PC-3 (cell line): ENCODE measurements at regions of chr14 and their contacts with region 1.

Region 1: DNA sequence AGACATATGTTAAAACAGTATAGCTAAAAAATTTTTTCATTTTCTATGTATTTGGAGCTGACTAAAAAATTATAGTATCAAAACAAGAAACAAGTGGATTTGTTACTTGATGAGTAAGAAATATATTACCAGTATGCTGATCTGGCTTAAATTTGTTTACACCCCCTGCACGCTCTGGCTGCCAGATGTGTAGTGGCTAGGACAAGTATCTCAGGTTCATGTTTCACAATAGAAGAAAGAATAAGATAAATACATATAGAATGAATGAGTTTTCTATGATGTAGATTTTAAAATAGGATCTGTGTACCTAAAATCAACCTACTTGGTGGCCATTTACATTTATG is 13.1 kb downstream of the NAA30 start:
- DNase-seq: no peak
- ATAC-seq: no peak
- H3K4me3 ChIP-seq: no peak overlapping the region
- H3K27ac ChIP-seq: no peak overlapping the region
- H3K4me1 ChIP-seq: no peaks in the 10 kb centered on the region
- H3K27me3 ChIP-seq: no peaks in the 10 kb centered on the region
- CTCF ChIP-seq: no peak

Region 2: GRCh38 chr14:57420033-57420432 is 16.5 kb after region 1 on chr14:
- CTCF ChIA-PET with region 1: no interaction called
- POLR2A ChIA-PET with region 1: no interaction called
- intact Hi-C with region 1: loop called (anchors 2 kb)
- DNase-seq: no peak
- ATAC-seq: no peak
- H3K4me3 ChIP-seq: no peak overlapping the region
- H3K27ac ChIP-seq: no peak overlapping the region
- H3K4me1 ChIP-seq: peaks cover 6% of the 10 kb centered on the region; the same call in 1 of the 2 replicates
- H3K27me3 ChIP-seq: no peaks in the 10 kb centered on the region
- CTCF ChIP-seq: no peak

Region 3: DNA sequence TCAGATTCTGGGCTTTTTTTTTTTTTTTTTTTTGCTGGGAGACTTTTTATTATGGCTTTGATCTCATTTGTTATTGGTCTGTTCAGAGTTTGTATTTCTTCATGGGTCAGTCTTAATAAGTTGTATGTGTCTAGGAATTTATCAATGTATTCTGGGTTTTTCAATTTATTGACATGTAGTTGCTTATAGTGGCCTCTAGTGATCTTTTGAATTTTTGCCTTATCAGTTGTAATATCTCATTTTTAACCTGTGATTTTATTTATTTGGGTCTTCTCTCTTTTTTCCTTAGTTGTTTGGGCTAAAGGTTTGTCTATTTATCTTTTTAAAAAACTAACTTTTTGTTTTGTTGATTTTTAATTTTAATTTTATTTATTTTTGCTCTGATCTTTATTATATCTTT is 32.4 kb after region 1 on chr14:
- CTCF ChIA-PET with region 1: no interaction called
- POLR2A ChIA-PET with region 1: no interaction called
- intact Hi-C with region 1: no loop called
- DNase-seq: no peak
- ATAC-seq: no peak
- H3K4me3 ChIP-seq: no peak overlapping the region
- H3K27ac ChIP-seq: no peak overlapping the region
- H3K4me1 ChIP-seq: no peaks in the 10 kb centered on the region
- H3K27me3 ChIP-seq: peaks cover 24% of the 10 kb centered on the region
- CTCF ChIP-seq: peak; percentile 53

Region 4: GRCh38 chr14:58969951-58970751 is 1566.7 kb after region 1 on chr14:
- CTCF ChIA-PET with region 1: no interaction called
- POLR2A ChIA-PET with region 1: no interaction called
- intact Hi-C with region 1: no loop called
- DNase-seq: no peak
- ATAC-seq: no peak
- H3K4me3 ChIP-seq: no peak overlapping the region
- H3K27ac ChIP-seq: no peak overlapping the region
- H3K4me1 ChIP-seq: no peaks in the 10 kb centered on the region
- H3K27me3 ChIP-seq: peaks cover 91% of the 10 kb centered on the region
- CTCF ChIP-seq: no peak